ENCODE measurements at regions of chr20 and their contacts with region 1.

Region 1: DNA sequence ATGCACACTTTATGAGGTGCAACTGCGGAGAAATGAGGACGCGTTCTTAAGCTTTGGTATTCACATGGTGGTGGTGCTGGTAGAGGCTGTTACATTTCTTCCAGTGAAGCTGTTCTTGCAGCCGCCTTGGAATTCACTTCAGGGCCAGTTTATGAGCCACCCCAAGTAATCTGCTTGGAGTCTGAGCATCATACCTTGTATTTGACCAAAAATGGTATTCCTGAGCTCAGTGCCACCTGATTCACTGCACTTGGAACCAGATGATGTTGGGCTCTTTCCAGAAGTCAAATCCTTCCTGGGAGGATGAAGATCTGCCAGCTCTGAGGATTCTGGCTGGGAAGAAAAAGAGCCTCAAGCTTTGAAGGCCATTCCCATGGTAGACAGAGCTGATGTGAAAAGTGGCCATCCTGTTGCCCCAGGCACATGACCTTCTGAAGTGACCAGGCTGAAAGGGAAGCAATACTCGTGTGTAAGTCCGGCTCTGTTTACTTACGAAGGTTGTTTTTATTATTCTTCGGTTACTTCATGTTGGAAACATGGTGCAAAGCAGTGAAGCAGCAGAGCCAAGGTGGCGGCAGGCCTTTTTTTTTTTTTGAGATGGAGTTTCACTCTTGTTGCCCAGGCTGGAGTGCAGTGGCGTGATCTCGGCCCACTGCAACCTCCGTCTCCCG is 7.7 kb downstream of the MANBAL start:
- DNase-seq: peak in 1 of 2 donors; percentile 54
- ATAC-seq: peak; percentile 61
- H3K4me3 ChIP-seq: no peak overlapping the region
- H3K27ac ChIP-seq: peak overlapping the region; percentile 97
- H3K4me1 ChIP-seq: peaks cover 5% of the 10 kb centered on the region in 2 donors
- H3K27me3 ChIP-seq: no peaks in the 10 kb centered on the region

Region 2: GRCh38 chr20:37243076-37243936 is 53.9 kb before region 1 on chr20:
- intact Hi-C with region 1: no loop called
- DNase-seq: no peak
- ATAC-seq: peak; percentile 26
- H3K4me3 ChIP-seq: no peak overlapping the region
- H3K27ac ChIP-seq: peak overlapping the region in 1 of 2 donors; percentile 10
- H3K4me1 ChIP-seq: no peaks in the 10 kb centered on the region
- H3K27me3 ChIP-seq: no peaks in the 10 kb centered on the region

Region 3: GRCh38 chr20:37356387-37356786 is 59.2 kb after region 1 on chr20:
- intact Hi-C with region 1: loop called in 1 of 2 experiments (anchors 2 kb)
- DNase-seq: peak; percentile 91 to 94
- ATAC-seq: peak; percentile 33
- H3K4me3 ChIP-seq: no peak overlapping the region
- H3K27ac ChIP-seq: peak overlapping the region in 1 of 2 donors; percentile 4
- H3K4me1 ChIP-seq: peaks cover 0 to 1% of the 10 kb centered on the region in 2 donors
- H3K27me3 ChIP-seq: no peaks in the 10 kb centered on the region